Stomach (tissue), 19 donors: ENCODE measurements at regions of chr3 and their contacts with region 1.

Region 1: DNA sequence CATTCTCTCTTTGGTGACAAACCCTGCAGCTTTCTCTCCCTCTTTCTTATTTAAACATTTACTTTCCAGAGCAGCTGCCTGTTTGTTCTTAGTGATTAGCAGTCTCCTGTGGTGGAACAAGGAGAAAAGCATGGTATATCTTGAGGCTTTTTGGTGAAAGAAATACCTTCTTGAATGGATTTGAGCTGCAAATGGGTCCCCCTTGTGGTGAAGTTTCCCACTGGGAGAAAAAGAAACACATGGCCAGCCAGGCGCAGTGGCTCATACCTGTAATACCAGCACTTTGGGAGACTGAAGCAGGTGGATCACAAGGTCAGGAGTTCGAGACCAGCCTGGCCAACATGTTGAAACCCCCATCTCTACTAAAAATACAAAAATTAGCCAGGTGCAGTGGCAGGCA is 48.3 kb upstream of the ACP3 start:
- DNase-seq: peak in 1 of 2 donors; percentile 42
- H3K4me3 ChIP-seq: no peak overlapping the region
- H3K27ac ChIP-seq: peak overlapping the region in 2 of 5 donors; percentile 41 to 61
- H3K4me1 ChIP-seq: peaks cover 0 to 5% (median 2%) of the 10 kb centered on the region in 4 donors
- H3K27me3 ChIP-seq: no peaks in the 10 kb centered on the region
- CTCF ChIP-seq: no peak
- EP300 ChIP-seq: no peak
- POLR2A ChIP-seq: no peak

Region 2: GRCh38 chr3:132210476-132211346 is 58.2 kb before region 1 on chr3:
- intact Hi-C with region 1: no loop called
- DNase-seq: peak; percentile 63 to 68
- H3K4me3 ChIP-seq: no peak overlapping the region
- H3K27ac ChIP-seq: no peak overlapping the region
- H3K4me1 ChIP-seq: peaks cover 0 to 9% (median 4%) of the 10 kb centered on the region in 4 donors
- H3K27me3 ChIP-seq: no peaks in the 10 kb centered on the region
- CTCF ChIP-seq: peak in 4 of 7 experiments; percentile 38 to 71 (median 58)
- EP300 ChIP-seq: no peak
- POLR2A ChIP-seq: no peak

Region 3: GRCh38 chr3:132343018-132343612 is 74.2 kb after region 1 on chr3:
- intact Hi-C with region 1: loop called (anchors 10 kb)
- DNase-seq: peak; percentile 42 to 85
- H3K4me3 ChIP-seq: peak overlapping the region in 1 of 4 donors; percentile 25
- H3K27ac ChIP-seq: no peak overlapping the region
- H3K4me1 ChIP-seq: peaks cover 0 to 11% (median 5%) of the 10 kb centered on the region in 4 donors
- H3K27me3 ChIP-seq: no peaks in the 10 kb centered on the region
- CTCF ChIP-seq: peak in 5 of 7 experiments; percentile 66 to 92 (median 78)
- EP300 ChIP-seq: no peak
- POLR2A ChIP-seq: no peak

Region 4: DNA sequence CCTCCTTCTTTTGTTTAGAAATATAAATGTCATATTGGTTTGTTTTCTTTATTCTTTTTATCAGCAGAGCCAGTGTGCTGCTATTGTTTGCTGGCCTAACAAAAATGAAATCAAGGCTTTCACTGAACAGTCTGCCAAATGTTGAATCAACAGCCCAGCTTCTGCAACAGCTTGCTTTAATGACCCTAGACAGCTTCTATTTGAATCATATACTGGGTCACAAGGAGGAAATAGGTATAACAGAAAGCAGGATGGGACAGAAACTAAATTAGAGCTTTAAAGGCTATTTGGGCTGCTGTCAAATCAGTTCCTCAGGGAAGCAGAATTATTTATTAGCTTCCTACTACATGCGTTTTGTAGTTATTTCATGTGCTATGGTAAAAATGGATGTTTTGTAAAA is 136.2 kb after region 1 on chr3:
- intact Hi-C with region 1: no loop called
- DNase-seq: peak in 1 of 2 donors; percentile 53
- H3K4me3 ChIP-seq: no peak overlapping the region
- H3K27ac ChIP-seq: peak overlapping the region in 1 of 5 donors; percentile 38
- H3K4me1 ChIP-seq: peaks cover 0 to 18% (median 13%) of the 10 kb centered on the region in 4 donors
- H3K27me3 ChIP-seq: no peaks in the 10 kb centered on the region
- CTCF ChIP-seq: no peak
- EP300 ChIP-seq: no peak
- POLR2A ChIP-seq: no peak